ENCODE measurements at regions of chr2 and their contacts with region 1.

Region 1: GRCh38 chr2:20578895-20579825 is 71.7 kb downstream of the HS1BP3 start:
- DNase-seq: no peak
- H3K4me3 Mint-ChIP-seq: no peak overlapping the region
- H3K27ac Mint-ChIP-seq: no peak overlapping the region
- H3K4me1 Mint-ChIP-seq: peaks cover 25% of the 10 kb centered on the region
- H3K27me3 Mint-ChIP-seq: no peaks in the 10 kb centered on the region

Region 2: DNA sequence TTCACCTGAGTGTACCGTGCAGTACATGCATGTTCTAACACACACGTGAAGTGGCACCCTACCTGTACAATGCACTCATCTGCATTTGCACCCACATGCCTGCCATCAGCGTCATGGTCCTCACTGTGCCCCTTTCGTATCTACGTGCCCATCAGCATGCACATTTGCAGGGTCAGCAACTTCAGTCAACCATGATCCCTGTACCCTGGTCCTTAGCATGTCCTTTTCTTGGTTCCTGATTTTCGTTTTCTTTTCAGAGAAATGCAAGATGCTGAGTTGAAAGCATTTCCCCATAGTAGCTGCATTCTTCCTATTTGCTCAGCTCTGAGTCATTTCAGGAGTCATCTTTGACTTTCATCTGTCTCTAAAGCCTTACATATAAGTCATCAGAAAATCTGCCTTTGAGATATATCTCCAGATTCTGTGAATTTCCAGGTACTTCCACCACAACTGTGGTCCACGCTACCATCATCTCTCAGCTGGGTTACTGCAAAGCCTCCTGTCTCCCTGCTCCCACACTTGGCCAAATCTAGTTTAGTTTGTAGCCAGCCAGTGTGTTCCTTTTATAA is 213.8 kb before region 1 on chr2:
- intact Hi-C with region 1: loop called (anchors 2 kb)
- DNase-seq: peak; percentile 88
- H3K4me3 Mint-ChIP-seq: peak overlapping the region; percentile 29
- H3K27ac Mint-ChIP-seq: peak overlapping the region; percentile 74
- H3K4me1 Mint-ChIP-seq: peaks cover 27% of the 10 kb centered on the region
- H3K27me3 Mint-ChIP-seq: no peaks in the 10 kb centered on the region

Region 3: GRCh38 chr2:20992201-20992711 is 413.1 kb after region 1 on chr2:
- intact Hi-C with region 1: no loop called
- DNase-seq: no peak
- H3K4me3 Mint-ChIP-seq: no peak overlapping the region
- H3K27ac Mint-ChIP-seq: no peak overlapping the region
- H3K4me1 Mint-ChIP-seq: no peaks in the 10 kb centered on the region
- H3K27me3 Mint-ChIP-seq: no peaks in the 10 kb centered on the region